ENCODE measurements at regions of chr16 and their contacts with region 1.

Region 1: GRCh38 chr16:53022374-53022773 is 30.3 kb downstream of the CHD9NB start:
- DNase-seq: peak; percentile 18 to 59 (median 38)
- H3K4me3 ChIP-seq: no peak overlapping the region
- H3K27ac ChIP-seq: no peak overlapping the region
- H3K4me1 ChIP-seq: no peaks in the 10 kb centered on the region
- H3K27me3 ChIP-seq: no peaks in the 10 kb centered on the region
- CTCF ChIP-seq: peak; percentile 41 to 65 (median 56)
- POLR2A ChIP-seq: no peak

Region 2: GRCh38 chr16:52069866-52070265 is 952.5 kb before region 1 on chr16:
- intact Hi-C with region 1: loop called in 1 of 2 experiments (anchors 5 kb)
- DNase-seq: no peak
- H3K4me3 ChIP-seq: no peak overlapping the region
- H3K27ac ChIP-seq: no peak overlapping the region
- H3K4me1 ChIP-seq: no peaks in the 10 kb centered on the region
- H3K27me3 ChIP-seq: no peaks in the 10 kb centered on the region
- CTCF ChIP-seq: peak in 1 of 6 experiments; percentile 22
- POLR2A ChIP-seq: no peak

Region 3: GRCh38 chr16:52191531-52192134 is 830.7 kb before region 1 on chr16:
- intact Hi-C with region 1: loop called in 1 of 2 experiments (anchors 5 kb)
- DNase-seq: peak; percentile 40 to 87 (median 56)
- H3K4me3 ChIP-seq: no peak overlapping the region
- H3K27ac ChIP-seq: no peak overlapping the region
- H3K4me1 ChIP-seq: no peaks in the 10 kb centered on the region
- H3K27me3 ChIP-seq: no peaks in the 10 kb centered on the region
- CTCF ChIP-seq: peak; percentile 82 to 90 (median 88)
- POLR2A ChIP-seq: no peak

Region 4: GRCh38 chr16:52991572-52991971 is 30.8 kb before region 1 on chr16:
- intact Hi-C with region 1: no loop called
- DNase-seq: no peak
- H3K4me3 ChIP-seq: no peak overlapping the region
- H3K27ac ChIP-seq: no peak overlapping the region
- H3K4me1 ChIP-seq: no peaks in the 10 kb centered on the region
- H3K27me3 ChIP-seq: no peaks in the 10 kb centered on the region
- CTCF ChIP-seq: no peak
- POLR2A ChIP-seq: no peak

Measured in adrenal gland (tissue), 19 donors.